Calu3 (cell line): ENCODE measurements at regions of chr1 and their contacts with region 1.

Region 1: GRCh38 chr1:204806943-204807687 is 63.5 kb upstream of the NFASC start:
- DNase-seq: peak; percentile 90
- H3K4me3 Mint-ChIP-seq: peak overlapping the region; percentile 66
- H3K27ac Mint-ChIP-seq: no peak overlapping the region
- H3K4me1 Mint-ChIP-seq: no peaks in the 10 kb centered on the region
- H3K27me3 Mint-ChIP-seq: peaks cover 42% of the 10 kb centered on the region
- CTCF ChIP-seq: peak; percentile 100

Region 2: DNA sequence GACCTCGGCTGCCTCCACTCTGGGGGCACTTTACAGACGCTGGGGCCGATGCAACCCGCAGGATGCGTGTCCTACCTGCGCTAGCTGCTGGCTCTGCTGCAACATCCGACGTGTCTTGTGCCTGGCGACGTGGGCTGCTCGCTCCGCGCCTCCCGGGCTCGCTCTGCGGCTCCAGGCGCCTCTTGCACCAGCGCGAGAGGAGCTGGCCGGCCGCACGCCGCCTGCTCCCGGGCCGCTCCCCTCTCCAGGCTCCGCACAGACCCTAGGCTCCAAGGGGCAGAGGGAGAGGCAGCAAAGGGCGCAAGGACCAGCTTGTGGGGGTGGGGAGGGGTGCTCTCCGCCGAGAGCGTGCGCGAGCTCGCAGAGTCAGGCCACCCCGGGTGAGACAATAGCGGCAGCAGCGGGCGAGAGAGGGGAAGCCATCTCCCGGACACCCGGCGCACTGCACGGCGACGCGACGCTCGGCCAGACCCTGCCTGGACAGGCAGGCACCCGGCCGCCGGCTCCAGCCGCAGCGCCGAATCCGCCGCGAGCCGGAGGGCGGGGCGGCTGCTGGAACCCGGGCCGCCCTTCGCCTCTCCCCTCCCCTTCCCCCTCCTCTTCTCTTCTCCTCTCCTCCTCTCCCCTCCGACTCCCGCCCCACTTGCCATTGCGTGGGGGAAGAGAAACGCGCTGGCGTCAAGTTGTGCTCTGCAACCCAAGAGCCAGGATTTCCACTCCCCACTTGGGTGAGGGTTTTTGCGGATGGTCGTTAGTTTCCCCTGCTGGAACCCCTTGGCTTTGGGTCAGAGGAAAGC is 312.6 kb before region 1 on chr1 and contains the start of gene PIK3C2B:
- CTCF ChIA-PET with region 1: interaction called, 10 read pairs
- intact Hi-C with region 1: no loop called
- DNase-seq: peak; percentile 92
- H3K4me3 Mint-ChIP-seq: peak within 1 kb of the TSS; percentile 84
- H3K27ac Mint-ChIP-seq: peak within 1 kb of the TSS; percentile 77
- H3K4me1 Mint-ChIP-seq: peaks cover 33% of the 10 kb centered on the region
- H3K27me3 Mint-ChIP-seq: peaks cover 8% of the 10 kb centered on the region
- CTCF ChIP-seq: peak; percentile 68
- total RNA-seq, gene PIK3C2B: 24.4 and 33.9 TPM in 2 replicates

Region 3: DNA sequence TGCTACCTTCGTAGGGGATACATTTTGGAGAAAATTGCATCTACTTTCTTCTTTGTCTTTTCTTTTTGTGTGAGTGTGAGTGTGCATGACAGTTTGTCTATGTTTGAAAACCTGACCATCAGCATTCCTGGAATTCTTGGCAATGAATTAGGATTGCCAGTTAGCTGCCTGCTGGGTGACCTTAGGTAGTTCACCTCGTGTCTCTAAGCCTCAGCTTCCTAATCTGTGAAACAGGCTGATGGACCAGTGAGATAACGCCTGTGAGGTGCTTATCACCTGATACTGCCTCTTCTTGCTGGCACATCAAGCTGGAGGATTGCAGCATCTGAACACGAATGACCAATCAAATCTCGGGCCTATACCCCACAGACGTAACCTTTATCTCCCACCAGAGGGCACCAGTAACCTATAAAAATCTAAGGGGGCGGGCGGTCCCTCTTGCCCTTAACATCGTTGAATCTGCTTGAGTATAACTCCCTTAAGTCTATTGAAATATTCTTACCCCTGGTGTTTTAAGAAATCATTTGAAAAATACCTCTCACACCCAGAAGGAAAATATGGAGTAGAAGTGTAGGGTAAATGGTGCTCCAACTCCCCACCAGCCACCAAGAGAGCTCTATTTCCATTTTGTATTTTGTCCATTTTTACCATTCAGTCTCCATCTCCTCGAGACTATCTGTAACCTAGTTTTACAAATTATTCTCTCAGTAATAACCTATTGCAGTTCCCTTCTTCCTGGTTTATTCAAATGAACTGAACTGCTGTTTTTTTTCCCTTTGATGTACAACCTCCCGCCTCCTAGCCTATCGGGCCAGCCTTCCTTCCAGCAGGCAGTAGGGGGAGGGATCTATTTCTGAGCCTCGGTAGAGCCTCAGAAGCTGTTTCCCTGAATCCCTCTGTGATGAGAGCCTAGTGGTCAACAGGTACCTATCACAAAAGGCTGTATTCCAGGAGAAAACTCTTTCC is 241.2 kb before region 1 on chr1:
- CTCF ChIA-PET with region 1: interaction called, 107 read pairs
- intact Hi-C with region 1: loop called (anchors 1 kb)
- DNase-seq: peak; percentile 65
- H3K4me3 Mint-ChIP-seq: peak overlapping the region; percentile 13
- H3K27ac Mint-ChIP-seq: no peak overlapping the region
- H3K4me1 Mint-ChIP-seq: peaks cover 32% of the 10 kb centered on the region
- H3K27me3 Mint-ChIP-seq: no peaks in the 10 kb centered on the region
- CTCF ChIP-seq: peak; percentile 87

Region 4: GRCh38 chr1:204741440-204741839 is 65.7 kb before region 1 on chr1:
- CTCF ChIA-PET with region 1: no interaction called
- intact Hi-C with region 1: loop called (anchors 1 kb)
- DNase-seq: no peak
- H3K4me3 Mint-ChIP-seq: no peak overlapping the region
- H3K27ac Mint-ChIP-seq: no peak overlapping the region
- H3K4me1 Mint-ChIP-seq: no peaks in the 10 kb centered on the region
- H3K27me3 Mint-ChIP-seq: peaks cover 77% of the 10 kb centered on the region
- CTCF ChIP-seq: no peak

Region 5: DNA sequence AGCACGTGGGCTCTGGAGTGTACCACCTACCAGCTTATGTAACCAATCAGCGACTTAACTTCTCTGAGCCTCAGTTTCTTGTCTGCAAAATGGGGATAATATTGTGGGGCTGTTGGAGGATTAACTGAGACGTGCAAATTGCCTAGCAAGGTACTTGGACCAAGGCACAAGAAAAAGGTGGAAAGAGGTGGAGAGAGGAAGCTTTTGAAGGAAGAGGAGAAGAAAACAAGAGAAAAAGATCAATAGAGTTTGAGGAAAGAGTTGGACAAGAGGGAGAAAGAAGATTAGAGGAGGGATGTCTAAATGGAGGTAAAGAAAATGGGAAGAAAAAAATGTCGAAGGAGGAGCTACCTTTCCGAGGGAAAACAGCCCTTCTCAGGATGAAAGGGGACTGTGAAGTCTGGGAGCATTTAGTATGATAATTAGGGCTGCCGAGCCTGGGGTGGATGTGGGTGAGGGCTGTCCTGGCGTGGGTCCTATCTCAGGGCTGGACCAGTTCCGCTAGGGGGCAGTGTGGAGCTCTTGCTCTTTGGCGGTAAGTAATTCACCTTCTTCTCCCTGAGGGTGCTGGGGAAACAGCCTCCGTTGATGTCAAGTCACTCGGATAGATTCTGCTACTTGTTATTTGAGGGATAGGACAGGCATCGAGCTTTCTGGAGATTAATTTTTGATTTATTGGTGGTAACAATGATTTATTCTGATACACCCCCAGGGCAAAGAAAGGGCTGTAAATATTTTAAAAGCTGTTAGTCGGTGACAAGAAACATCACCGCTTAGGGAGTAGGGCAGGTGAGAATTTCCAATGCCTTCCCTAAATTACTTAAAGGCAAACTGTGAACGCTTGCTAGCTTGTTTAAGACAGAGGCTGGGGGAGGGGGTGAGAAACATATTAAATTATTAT is 15.4 kb before region 1 on chr1:
- CTCF ChIA-PET with region 1: interaction called, 16 read pairs
- intact Hi-C with region 1: no loop called
- DNase-seq: peak; percentile 87
- H3K4me3 Mint-ChIP-seq: no peak overlapping the region
- H3K27ac Mint-ChIP-seq: no peak overlapping the region
- H3K4me1 Mint-ChIP-seq: peaks cover 9% of the 10 kb centered on the region
- H3K27me3 Mint-ChIP-seq: peaks cover 92% of the 10 kb centered on the region
- CTCF ChIP-seq: peak; percentile 91

Region 6: GRCh38 chr1:205061665-205062069 is 254.6 kb after region 1 on chr1:
- CTCF ChIA-PET with region 1: interaction called, 13 read pairs
- intact Hi-C with region 1: no loop called
- DNase-seq: peak; percentile 84
- H3K4me3 Mint-ChIP-seq: no peak overlapping the region
- H3K27ac Mint-ChIP-seq: no peak overlapping the region
- H3K4me1 Mint-ChIP-seq: no peaks in the 10 kb centered on the region
- H3K27me3 Mint-ChIP-seq: peaks cover 69% of the 10 kb centered on the region
- CTCF ChIP-seq: peak; percentile 89